Prostate gland (tissue), 2 donors: ENCODE measurements at regions of chr1 and their contacts with region 1.

Region 1: GRCh38 chr1:33256701-33257399 is 558 bp downstream of the ZNF362 start:
- DNase-seq: peak; percentile 74
- H3K4me3 ChIP-seq: peak overlapping the region; percentile 49 to 61
- H3K27ac ChIP-seq: peak overlapping the region; percentile 67 to 81
- H3K4me1 ChIP-seq: no peaks in the 10 kb centered on the region
- H3K27me3 ChIP-seq: no peaks in the 10 kb centered on the region
- CTCF ChIP-seq: no peak
- POLR2A ChIP-seq: peak; percentile 34

Region 2: GRCh38 chr1:33295450-33296081 is 38.7 kb after region 1 on chr1:
- intact Hi-C with region 1: no loop called
- DNase-seq: peak; percentile 87
- H3K4me3 ChIP-seq: no peak overlapping the region
- H3K27ac ChIP-seq: no peak overlapping the region
- H3K4me1 ChIP-seq: no peaks in the 10 kb centered on the region
- H3K27me3 ChIP-seq: no peaks in the 10 kb centered on the region
- CTCF ChIP-seq: peak; percentile 97 to 99 (median 98)
- POLR2A ChIP-seq: no peak

Region 3: GRCh38 chr1:33334081-33334552 is 77.3 kb after region 1 on chr1:
- intact Hi-C with region 1: loop called (anchors 5 kb)
- DNase-seq: no peak
- H3K4me3 ChIP-seq: no peak overlapping the region
- H3K27ac ChIP-seq: peak overlapping the region; percentile 50 to 57
- H3K4me1 ChIP-seq: peaks cover 3% of the 10 kb centered on the region
- H3K27me3 ChIP-seq: no peaks in the 10 kb centered on the region
- CTCF ChIP-seq: no peak
- POLR2A ChIP-seq: no peak

Region 4: DNA sequence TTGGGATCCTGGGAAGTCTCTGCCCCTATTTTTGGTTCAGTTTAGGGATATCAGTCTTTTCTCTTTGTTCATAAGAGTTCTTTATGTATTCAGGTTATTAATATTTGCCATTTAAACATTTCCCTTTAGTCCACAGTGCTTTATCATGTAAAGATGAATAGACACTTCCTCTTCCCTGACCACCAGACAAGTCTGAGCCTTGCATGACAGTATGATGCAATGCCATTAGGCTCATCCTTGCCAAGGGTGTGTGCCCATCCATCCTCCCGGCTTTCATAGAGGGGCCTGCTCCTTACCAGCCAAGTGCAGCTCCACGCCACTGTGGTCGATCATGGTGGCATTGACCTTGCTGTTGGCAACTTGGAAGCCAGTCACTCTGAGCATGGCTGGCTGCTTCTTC is 267.7 kb after region 1 on chr1:
- intact Hi-C with region 1: no loop called
- DNase-seq: no peak
- H3K4me3 ChIP-seq: no peak overlapping the region
- H3K27ac ChIP-seq: no peak overlapping the region
- H3K4me1 ChIP-seq: no peaks in the 10 kb centered on the region
- H3K27me3 ChIP-seq: no peaks in the 10 kb centered on the region
- CTCF ChIP-seq: no peak
- POLR2A ChIP-seq: no peak